B cell (primary cell): ENCODE measurements at regions of chrX and their contacts with region 1.

Region 1: GRCh38 chrX:103845165-103845653 is 13.2 kb upstream of the RAB9B start:
- DNase-seq: peak; percentile 50
- ATAC-seq: peak; percentile 39
- H3K4me3 ChIP-seq: no peak overlapping the region
- H3K4me3 Mint-ChIP-seq: no peak overlapping the region
- H3K27ac ChIP-seq: no peak overlapping the region
- H3K27ac Mint-ChIP-seq: no peak overlapping the region
- H3K4me1 ChIP-seq: no peaks in the 10 kb centered on the region
- H3K4me1 Mint-ChIP-seq: no peaks in the 10 kb centered on the region
- H3K27me3 ChIP-seq: no peaks in the 10 kb centered on the region
- H3K27me3 Mint-ChIP-seq: peaks cover 2% of the 10 kb centered on the region
- CTCF ChIP-seq: peak; percentile 58

Region 2: GRCh38 chrX:103789004-103789403 is 56.2 kb before region 1 on chrX:
- CTCF ChIA-PET with region 1: no interaction called
- POLR2A ChIA-PET with region 1: no interaction called
- intact Hi-C with region 1: no loop called
- DNase-seq: peak; percentile 28
- ATAC-seq: peak; percentile 64
- H3K4me3 ChIP-seq: no peak overlapping the region
- H3K4me3 Mint-ChIP-seq: peak overlapping the region; percentile 15
- H3K27ac ChIP-seq: peak overlapping the region in 1 of 2 donors; percentile 39
- H3K27ac Mint-ChIP-seq: peak overlapping the region; percentile 75
- H3K4me1 ChIP-seq: peaks cover 19 to 20% of the 10 kb centered on the region in 2 donors
- H3K4me1 Mint-ChIP-seq: peaks cover 21% of the 10 kb centered on the region
- H3K27me3 ChIP-seq: no peaks in the 10 kb centered on the region
- H3K27me3 Mint-ChIP-seq: no peaks in the 10 kb centered on the region
- CTCF ChIP-seq: no peak

Region 3: DNA sequence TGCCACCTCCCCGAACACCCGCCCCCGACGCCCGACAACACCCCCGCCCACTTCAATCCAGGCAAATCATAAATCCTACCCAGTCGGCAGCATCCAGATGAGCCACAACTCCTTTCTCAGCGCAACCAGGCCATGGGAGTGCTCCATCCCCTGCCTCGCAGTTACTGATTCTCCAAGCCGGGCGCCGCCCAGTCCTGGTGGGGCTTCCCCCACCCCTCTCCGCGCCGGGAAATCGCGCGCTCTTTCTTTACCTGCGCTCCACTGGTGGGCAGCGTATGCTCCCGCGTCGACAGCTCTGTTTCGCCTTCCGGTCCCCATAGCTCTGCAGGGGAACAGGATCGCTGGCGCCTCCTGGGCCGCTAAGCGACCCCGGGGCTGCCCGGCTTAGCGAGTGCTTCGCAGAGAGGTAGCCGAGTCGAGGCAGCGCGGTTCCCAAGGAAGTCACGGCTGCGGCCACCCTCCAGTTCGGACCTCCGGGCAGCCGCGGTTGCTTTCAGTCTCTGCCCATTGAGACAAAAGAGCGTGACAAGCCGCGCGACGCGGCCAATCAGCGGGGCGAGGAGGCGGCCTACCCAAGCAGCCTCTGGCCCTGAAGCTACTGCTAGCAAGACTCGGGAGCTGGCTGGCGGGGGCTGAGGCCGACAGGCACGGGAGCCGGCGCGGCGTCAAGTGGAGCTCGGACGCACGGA is 73.5 kb after region 1 on chrX:
- CTCF ChIA-PET with region 1: interaction called, 10 read pairs
- POLR2A ChIA-PET with region 1: no interaction called
- intact Hi-C with region 1: no loop called
- DNase-seq: peak; percentile 69
- ATAC-seq: peak; percentile 75
- H3K4me3 ChIP-seq: peak overlapping the region in 4 of 5 experiments; percentile 65 to 72 (median 67)
- H3K4me3 Mint-ChIP-seq: peak overlapping the region; percentile 94
- H3K27ac ChIP-seq: peak overlapping the region; percentile 53 to 70
- H3K27ac Mint-ChIP-seq: peak overlapping the region; percentile 91
- H3K4me1 ChIP-seq: peaks cover 0 to 5% of the 10 kb centered on the region in 2 donors
- H3K4me1 Mint-ChIP-seq: peaks cover 12% of the 10 kb centered on the region
- H3K27me3 ChIP-seq: no peaks in the 10 kb centered on the region
- H3K27me3 Mint-ChIP-seq: no peaks in the 10 kb centered on the region
- CTCF ChIP-seq: no peak

Region 4: DNA sequence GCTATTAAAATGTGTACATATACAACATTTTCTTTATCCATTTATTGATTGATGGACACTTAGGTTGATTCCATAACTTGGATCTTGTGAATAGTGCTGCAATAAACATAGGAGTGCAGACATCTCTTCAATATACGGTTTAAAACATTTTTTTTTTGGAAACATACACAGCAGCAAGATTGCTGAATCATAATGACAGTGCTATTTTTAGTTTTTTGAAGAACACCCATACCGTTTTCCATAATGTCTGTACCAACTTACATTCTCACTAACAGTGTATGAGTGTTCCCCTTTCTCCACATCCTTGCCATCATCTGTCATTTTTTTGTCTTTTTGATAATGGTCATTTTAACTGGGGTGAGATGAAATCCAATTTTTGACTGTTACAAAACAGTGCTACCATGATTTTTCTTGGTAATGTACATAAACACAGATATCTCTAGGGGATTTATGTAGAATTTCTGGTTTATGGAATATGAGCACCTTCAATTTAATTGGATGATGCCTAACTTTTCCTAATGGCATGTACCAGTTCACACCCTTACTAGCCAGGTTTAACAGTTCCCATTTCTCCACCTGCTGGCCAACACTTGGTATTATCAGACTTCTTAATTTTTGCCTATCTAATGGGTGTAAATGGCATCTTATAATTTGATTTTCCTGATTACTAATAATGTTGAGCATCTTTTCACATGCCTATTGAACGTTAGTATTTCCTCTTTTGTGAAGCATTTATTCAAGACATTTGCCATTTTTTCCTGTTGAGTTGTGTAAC is 96.2 kb after region 1 on chrX:
- CTCF ChIA-PET with region 1: interaction called, 30 read pairs
- POLR2A ChIA-PET with region 1: no interaction called
- intact Hi-C with region 1: loop called (anchors 1 kb)
- DNase-seq: peak; percentile 37
- ATAC-seq: no peak
- H3K4me3 ChIP-seq: no peak overlapping the region
- H3K4me3 Mint-ChIP-seq: no peak overlapping the region
- H3K27ac ChIP-seq: no peak overlapping the region
- H3K27ac Mint-ChIP-seq: no peak overlapping the region
- H3K4me1 ChIP-seq: no peaks in the 10 kb centered on the region
- H3K4me1 Mint-ChIP-seq: peaks cover 15% of the 10 kb centered on the region
- H3K27me3 ChIP-seq: no peaks in the 10 kb centered on the region
- H3K27me3 Mint-ChIP-seq: no peaks in the 10 kb centered on the region
- CTCF ChIP-seq: peak; percentile 65

Region 5: GRCh38 chrX:104270920-104271512 is 425.8 kb after region 1 on chrX:
- CTCF ChIA-PET with region 1: no interaction called
- POLR2A ChIA-PET with region 1: no interaction called
- intact Hi-C with region 1: loop called (anchors 5 kb)
- DNase-seq: peak; percentile 8
- ATAC-seq: no peak
- H3K4me3 ChIP-seq: peak overlapping the region in 1 of 5 experiments; percentile 15
- H3K4me3 Mint-ChIP-seq: peak overlapping the region; percentile 54
- H3K27ac ChIP-seq: no peak overlapping the region
- H3K27ac Mint-ChIP-seq: no peak overlapping the region
- H3K4me1 ChIP-seq: no peaks in the 10 kb centered on the region
- H3K4me1 Mint-ChIP-seq: peaks cover 2% of the 10 kb centered on the region
- H3K27me3 ChIP-seq: no peaks in the 10 kb centered on the region
- H3K27me3 Mint-ChIP-seq: peaks cover 18% of the 10 kb centered on the region
- CTCF ChIP-seq: peak; percentile 52